IMR-90 (cell line): ENCODE measurements at regions of chr7 and their contacts with region 1.

Region 1: DNA sequence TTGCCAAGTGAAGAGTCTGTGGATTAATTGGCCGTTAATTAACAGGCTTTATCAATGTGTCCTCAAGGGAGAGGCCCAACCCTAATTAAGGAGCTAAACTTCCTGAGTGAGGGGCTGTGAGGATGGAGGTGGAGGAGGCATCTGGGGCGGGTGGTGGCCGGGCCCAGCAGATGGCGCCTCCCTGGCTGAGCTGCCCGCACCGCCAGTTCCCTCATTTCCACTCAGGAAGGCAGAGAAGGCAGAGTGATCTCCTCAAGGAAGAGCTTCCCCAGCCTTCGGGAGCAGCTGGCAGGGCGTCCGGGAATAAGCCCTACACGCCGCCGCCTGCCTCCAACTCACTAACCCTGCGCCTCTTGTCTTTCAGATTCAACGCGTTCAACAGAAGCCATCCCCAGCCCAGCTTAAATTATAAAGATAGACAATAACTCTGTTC is 112.2 kb downstream of the CYTH3 start:
- DNase-seq: peak; percentile 65
- ATAC-seq: peak; percentile 88
- H3K4me3 ChIP-seq: no peak overlapping the region
- H3K27ac ChIP-seq: no peak overlapping the region
- H3K4me1 ChIP-seq: peaks cover 1% of the 10 kb centered on the region
- H3K27me3 ChIP-seq: no peaks in the 10 kb centered on the region
- CTCF ChIP-seq: peak; percentile 73
- POLR2A ChIP-seq: no peak
- RAD21 ChIP-seq: peak; percentile 78

Region 2: DNA sequence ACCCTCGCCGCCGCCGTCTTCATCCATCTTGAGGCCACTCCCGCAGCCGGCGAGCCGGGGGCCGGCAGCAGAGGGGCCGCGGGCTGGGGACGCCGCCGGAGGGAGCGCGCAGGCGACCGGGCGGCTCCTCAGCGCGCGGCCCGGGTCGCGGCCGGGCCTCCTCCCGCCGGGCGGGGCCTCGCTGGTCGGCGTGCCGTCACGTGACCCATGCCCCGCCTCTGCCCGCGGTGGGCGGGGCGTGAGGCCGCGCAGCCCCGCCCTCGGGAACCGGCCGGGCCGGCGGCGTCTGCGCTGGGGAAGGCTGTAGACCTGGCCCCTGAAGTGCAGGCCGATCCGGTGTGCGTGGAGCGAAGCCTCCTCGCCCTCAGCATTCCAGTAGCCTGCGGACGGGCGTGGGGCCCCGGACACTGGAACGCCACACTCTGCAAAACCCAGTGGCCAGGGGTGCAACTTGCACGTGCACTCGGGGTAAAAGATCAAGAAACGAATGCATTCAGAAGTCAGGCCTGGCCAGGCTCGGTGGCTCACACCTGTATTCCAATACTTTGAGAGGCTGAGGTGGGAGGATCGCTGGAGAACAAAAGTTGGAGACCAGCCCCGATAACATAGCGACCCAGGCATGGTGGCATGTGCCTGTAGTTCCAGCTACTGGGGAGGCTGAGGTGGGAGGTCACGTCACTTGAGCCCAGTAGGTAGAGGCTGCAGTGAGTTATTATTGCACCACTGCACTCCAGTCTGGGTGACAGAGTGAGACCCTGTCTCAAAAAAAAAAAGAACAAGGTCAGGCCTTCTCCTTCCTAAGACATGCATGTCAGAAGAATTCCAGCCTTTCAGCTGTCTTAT is 112.5 kb after region 1 on chr7 and contains the start of gene CYTH3:
- CTCF ChIA-PET with region 1: interaction called, 7 read pairs
- POLR2A ChIA-PET with region 1: no interaction called
- dilution Hi-C with region 1: no loop called
- in situ Hi-C with region 1: no loop called
- intact Hi-C with region 1: loop called (anchors 1 kb)
- DNase-seq: peak; percentile 71
- ATAC-seq: peak; percentile 96
- H3K4me3 ChIP-seq: peak within 1 kb of the TSS; percentile 95
- H3K27ac ChIP-seq: peak within 1 kb of the TSS; percentile 75
- H3K4me1 ChIP-seq: peaks cover 14% of the 10 kb centered on the region
- H3K27me3 ChIP-seq: no peaks in the 10 kb centered on the region
- CTCF ChIP-seq: no peak
- POLR2A ChIP-seq: no peak
- RAD21 ChIP-seq: 0 out of 2 replicates have a peak, but pooled peaks have one; percentile 11
- total RNA-seq, gene CYTH3: 14.2 TPM in 2 replicates

Region 3: GRCh38 chr7:6323967-6324701 is 163.9 kb after region 1 on chr7:
- CTCF ChIA-PET with region 1: interaction called, 15 read pairs
- POLR2A ChIA-PET with region 1: no interaction called
- dilution Hi-C with region 1: no loop called
- in situ Hi-C with region 1: loop called (anchors 5 kb)
- intact Hi-C with region 1: loop called (anchors 1 kb)
- DNase-seq: no peak
- ATAC-seq: no peak
- H3K4me3 ChIP-seq: no peak overlapping the region
- H3K27ac ChIP-seq: no peak overlapping the region
- H3K4me1 ChIP-seq: no peaks in the 10 kb centered on the region
- H3K27me3 ChIP-seq: no peaks in the 10 kb centered on the region
- CTCF ChIP-seq: no peak
- POLR2A ChIP-seq: no peak
- RAD21 ChIP-seq: no peak

Region 4: GRCh38 chr7:6435486-6436384 is 275.5 kb after region 1 on chr7:
- CTCF ChIA-PET with region 1: no interaction called
- POLR2A ChIA-PET with region 1: no interaction called
- dilution Hi-C with region 1: no loop called
- in situ Hi-C with region 1: no loop called
- intact Hi-C with region 1: loop called (anchors 10 kb)
- DNase-seq: peak; percentile 78
- ATAC-seq: peak; percentile 95
- H3K4me3 ChIP-seq: no peak overlapping the region
- H3K27ac ChIP-seq: peak overlapping the region; percentile 65
- H3K4me1 ChIP-seq: peaks cover 6% of the 10 kb centered on the region; the same call in 1 of the 2 replicates
- H3K27me3 ChIP-seq: no peaks in the 10 kb centered on the region
- CTCF ChIP-seq: peak; percentile 96
- POLR2A ChIP-seq: no peak
- RAD21 ChIP-seq: peak; percentile 72